Activated naive CD4-positive, alpha-beta T cell treated with anti-CD3 and anti-CD28 coated beads for 36 hours (primary cell): ENCODE measurements at regions of chr12 and their contacts with region 1.

Region 1: GRCh38 chr12:48851883-48852733 is at the start of gene DDX23:
- DNase-seq: peak; percentile 97
- H3K4me3 Mint-ChIP-seq: peak within 1 kb of the TSS; percentile 94
- H3K27ac Mint-ChIP-seq: peak within 1 kb of the TSS; percentile 98
- H3K4me1 Mint-ChIP-seq: peaks cover 28% of the 10 kb centered on the region
- H3K27me3 Mint-ChIP-seq: no peaks in the 10 kb centered on the region
- total RNA-seq, gene DDX23: 115 to 125 TPM

Region 2: DNA sequence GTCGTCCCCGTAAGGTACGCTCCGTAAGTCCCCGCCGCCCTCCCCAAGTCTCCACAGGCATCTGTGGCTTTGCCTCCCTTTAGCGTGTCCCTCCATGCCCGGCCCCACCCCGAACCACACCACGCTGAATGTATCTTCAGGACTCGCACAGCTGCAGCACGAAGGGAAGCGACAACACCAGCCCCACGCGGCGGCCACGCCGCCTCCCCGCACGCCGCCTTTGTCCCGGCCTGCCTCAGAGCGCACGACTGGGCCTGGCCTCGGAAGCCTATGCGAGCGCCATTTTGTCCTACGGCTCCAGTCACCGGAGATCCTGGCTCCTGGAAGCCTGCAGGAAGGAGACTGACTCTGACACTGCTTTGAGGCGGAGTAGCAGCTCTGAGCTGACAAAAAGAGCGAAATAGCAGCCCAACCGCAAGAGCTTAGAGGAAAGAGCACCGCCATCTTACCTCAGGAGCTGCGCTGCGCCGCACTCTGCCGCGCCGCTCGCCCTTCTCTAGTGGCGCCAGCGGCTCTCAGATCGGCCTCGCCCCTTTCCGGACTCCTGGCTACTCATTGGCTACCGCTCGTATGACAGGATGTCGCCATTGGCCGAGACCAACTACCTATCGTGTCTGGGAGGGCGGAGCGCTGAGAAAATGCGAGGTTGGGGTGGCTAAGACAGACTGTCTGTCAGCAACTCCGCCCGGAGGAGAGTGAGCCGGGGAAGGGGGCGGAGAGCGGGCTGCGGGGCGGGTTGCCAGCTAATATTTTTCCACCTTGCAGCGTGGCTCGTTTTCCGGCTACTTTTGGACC is 170.2 kb before region 1 on chr12 and contains the start of gene KANSL2:
- CTCF ChIA-PET with region 1: no interaction called
- intact Hi-C with region 1: loop called (anchors 1 kb)
- DNase-seq: peak; percentile 99
- H3K4me3 Mint-ChIP-seq: peak within 1 kb of the TSS; percentile 98
- H3K27ac Mint-ChIP-seq: peak within 1 kb of the TSS; percentile 93
- H3K4me1 Mint-ChIP-seq: peaks cover 49% of the 10 kb centered on the region
- H3K27me3 Mint-ChIP-seq: no peaks in the 10 kb centered on the region
- total RNA-seq, gene KANSL2: 37.9 to 39.1 TPM

Region 3: GRCh38 chr12:48814262-48815125 is 37.6 kb before region 1 on chr12:
- CTCF ChIA-PET with region 1: interaction called, 29 read pairs
- intact Hi-C with region 1: loop called (anchors 1 kb)
- DNase-seq: peak; percentile 83
- H3K4me3 Mint-ChIP-seq: peak overlapping the region; percentile 93
- H3K27ac Mint-ChIP-seq: no peak overlapping the region
- H3K4me1 Mint-ChIP-seq: peaks cover 26% of the 10 kb centered on the region
- H3K27me3 Mint-ChIP-seq: peaks cover 15% of the 10 kb centered on the region

Region 4: DNA sequence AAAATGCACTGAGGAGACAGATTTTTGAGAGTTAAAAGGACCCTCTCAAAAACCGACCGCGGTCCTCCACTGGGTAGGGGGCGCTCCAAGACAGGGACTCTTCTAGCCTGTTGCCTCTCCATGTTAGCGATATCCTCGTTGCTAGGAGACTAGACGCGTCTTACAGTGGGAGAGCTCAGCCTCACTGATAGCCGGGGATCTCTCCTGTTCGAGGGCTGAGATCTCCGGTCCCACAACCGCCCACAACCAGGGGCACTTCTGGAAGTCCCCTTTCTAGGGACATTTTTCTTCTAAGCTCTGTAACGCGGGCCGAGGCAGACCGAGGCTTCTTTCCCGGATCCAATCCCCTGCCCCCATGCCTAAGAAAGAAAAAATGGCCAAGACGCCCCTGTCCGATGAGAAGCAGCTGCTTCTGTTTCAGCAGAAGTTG is 51.9 kb after region 1 on chr12:
- CTCF ChIA-PET with region 1: interaction called, 20 read pairs
- intact Hi-C with region 1: loop called (anchors 1 kb)
- DNase-seq: peak; percentile 92
- H3K4me3 Mint-ChIP-seq: peak overlapping the region; percentile 67
- H3K27ac Mint-ChIP-seq: no peak overlapping the region
- H3K4me1 Mint-ChIP-seq: peaks cover 6% of the 10 kb centered on the region
- H3K27me3 Mint-ChIP-seq: no peaks in the 10 kb centered on the region

Region 5: GRCh38 chr12:48957141-48958048 is 105.3 kb after region 1 on chr12 and contains the start of gene ARF3:
- CTCF ChIA-PET with region 1: interaction called, 11 read pairs
- intact Hi-C with region 1: loop called (anchors 1 kb)
- DNase-seq: peak; percentile 95
- H3K4me3 Mint-ChIP-seq: peak within 1 kb of the TSS; percentile 97
- H3K27ac Mint-ChIP-seq: peak within 1 kb of the TSS; percentile 86
- H3K4me1 Mint-ChIP-seq: peaks cover 29% of the 10 kb centered on the region
- H3K27me3 Mint-ChIP-seq: peaks cover 2% of the 10 kb centered on the region
- total RNA-seq, gene ARF3: 84.4 to 87.3 TPM

Region 6: DNA sequence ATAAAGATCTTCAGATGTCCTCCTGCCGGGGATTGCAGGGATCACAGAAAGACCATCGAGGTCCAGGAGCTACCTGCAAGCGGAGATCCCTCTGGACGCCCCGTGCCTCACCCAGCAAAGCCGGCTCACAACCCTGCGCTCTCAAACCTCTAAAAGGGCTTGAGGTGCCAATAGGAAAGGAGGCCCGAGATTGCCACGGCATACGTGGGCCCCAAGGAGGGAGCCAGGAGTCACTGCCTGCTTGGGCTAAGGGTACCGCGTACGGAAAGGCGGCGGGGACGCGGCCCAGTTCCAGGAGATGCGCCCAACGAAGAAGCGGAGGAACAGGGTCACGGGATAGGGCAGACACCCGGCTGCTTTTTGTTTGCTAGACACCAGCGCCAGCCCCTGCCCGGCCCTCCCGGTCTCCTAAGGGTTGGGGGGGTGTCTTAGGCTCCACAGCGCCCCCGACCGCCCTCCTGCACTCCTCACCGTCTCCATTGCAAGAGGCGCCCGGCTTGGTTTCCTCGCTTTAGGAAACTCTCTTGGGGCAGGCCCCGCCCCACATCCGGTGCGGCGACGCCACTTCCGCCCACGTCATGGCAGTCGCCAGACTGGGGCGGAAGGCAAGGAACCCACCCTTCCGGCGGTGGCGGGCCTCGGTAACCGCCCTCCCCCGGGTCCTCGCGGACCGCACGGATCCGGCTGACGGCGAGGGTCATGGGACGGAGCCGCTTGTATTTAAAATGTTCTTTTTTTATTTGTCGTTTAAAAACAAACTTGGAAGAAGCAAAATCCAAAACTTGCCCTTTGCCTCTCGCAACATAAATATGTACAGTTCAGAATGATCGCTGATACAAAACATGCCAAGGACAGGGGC is 166.4 kb after region 1 on chr12 and contains the start of gene PRKAG1:
- CTCF ChIA-PET with region 1: interaction called, 7 read pairs
- intact Hi-C with region 1: loop called (anchors 1 kb)
- DNase-seq: peak; percentile 96
- H3K4me3 Mint-ChIP-seq: peak within 1 kb of the TSS; percentile 87
- H3K27ac Mint-ChIP-seq: peak within 1 kb of the TSS; percentile 94
- H3K4me1 Mint-ChIP-seq: peaks cover 36% of the 10 kb centered on the region
- H3K27me3 Mint-ChIP-seq: no peaks in the 10 kb centered on the region
- total RNA-seq, gene PRKAG1: 49.4 to 50.9 TPM

Region 7: DNA sequence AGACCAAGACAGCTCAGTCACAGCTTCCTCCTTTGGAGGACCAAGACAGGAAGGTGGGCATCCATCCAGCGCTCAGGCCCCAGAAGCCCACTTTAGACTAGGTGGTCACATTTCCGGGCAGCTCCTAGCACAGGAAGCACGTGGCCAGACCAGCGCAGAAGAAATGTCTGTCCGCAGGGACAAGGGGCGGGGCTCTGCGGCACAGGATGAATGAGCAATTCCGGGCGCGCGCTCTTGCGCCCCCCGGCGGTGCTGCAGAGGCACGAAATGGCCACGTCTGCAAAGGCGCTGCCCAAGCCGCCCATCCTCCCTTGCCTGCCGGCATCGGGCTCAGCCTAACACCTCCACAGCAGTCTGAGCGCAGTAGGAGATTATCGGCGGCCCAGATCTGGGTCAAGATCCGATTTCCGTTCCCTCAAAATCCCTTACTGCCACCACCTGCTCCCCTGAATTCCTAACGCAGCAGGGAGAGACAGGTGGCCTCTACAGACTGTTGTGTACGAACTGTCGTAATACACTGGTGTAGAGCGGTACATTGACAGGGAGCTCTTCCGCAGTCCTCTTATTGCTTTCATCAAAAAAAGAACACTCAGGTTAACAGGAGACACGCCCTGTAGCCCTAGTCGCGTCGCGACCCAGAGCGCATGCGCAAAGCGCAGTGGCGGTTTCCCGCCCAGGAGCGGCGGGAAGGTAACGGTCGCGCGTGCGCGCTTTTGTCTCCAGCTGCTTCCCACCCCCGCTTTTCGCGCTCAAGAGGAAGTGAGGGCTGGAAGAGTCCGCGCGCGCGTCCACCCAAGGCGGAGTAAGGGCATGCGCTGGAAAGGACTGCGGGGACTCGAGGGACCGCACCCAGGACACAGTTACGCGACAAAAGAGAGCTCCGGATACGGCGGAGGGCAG is 278.3 kb after region 1 on chr12:
- CTCF ChIA-PET with region 1: no interaction called
- intact Hi-C with region 1: loop called (anchors 1 kb)
- DNase-seq: peak; percentile 96
- H3K4me3 Mint-ChIP-seq: peak overlapping the region; percentile 97
- H3K27ac Mint-ChIP-seq: peak overlapping the region; percentile 100
- H3K4me1 Mint-ChIP-seq: peaks cover 43% of the 10 kb centered on the region
- H3K27me3 Mint-ChIP-seq: no peaks in the 10 kb centered on the region